OCI-LY7 (cell line): ENCODE measurements at regions of chr1 and their contacts with region 1.

Region 1: GRCh38 chr1:39183503-39184353 is 20.8 kb upstream of the MACF1 start:
- DNase-seq: peak; percentile 87
- H3K4me3 ChIP-seq: no peak overlapping the region
- H3K27ac ChIP-seq: peak overlapping the region; percentile 64
- H3K4me1 ChIP-seq: peaks cover 25% of the 10 kb centered on the region
- CTCF ChIP-seq: peak; percentile 94

Region 2: GRCh38 chr1:39204441-39205081 is 20.8 kb after region 1 on chr1 and contains the start of gene MACF1:
- CTCF ChIA-PET with region 1: no interaction called
- POLR2A ChIA-PET with region 1: interaction called, 12 read pairs
- intact Hi-C with region 1: no loop called
- DNase-seq: peak; percentile 61
- H3K4me3 ChIP-seq: peak within 1 kb of the TSS; percentile 70
- H3K27ac ChIP-seq: peak within 1 kb of the TSS; percentile 70
- H3K4me1 ChIP-seq: peaks cover 55% of the 10 kb centered on the region
- CTCF ChIP-seq: peak; percentile 60
- total RNA-seq, gene MACF1: 211 and 235 TPM in 2 replicates